ENCODE measurements at regions of chr5 and their contacts with region 1.

Region 1: DNA sequence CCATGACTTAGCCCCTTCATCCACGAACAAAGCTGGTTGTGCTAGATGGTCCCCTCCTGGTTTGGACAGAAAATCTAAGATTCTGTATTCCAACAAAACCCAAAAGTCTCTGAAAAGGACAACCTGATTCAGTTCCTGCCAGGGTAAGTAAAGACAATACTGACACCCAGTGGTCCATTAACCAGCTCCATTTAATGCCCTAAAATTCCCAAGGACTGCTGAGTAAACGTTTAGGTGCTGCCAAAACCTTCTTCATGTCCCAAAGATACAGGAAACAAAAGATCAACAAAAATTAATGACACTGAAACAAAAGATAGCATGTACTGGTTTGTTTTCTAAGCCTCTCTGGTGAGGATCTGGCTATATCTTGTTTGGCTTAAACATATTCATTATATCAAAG is 25.3 kb upstream of the PPP1R2B start:
- DNase-seq: no peak

Region 2: GRCh38 chr5:155616779-155617392 is 1207.9 kb before region 1 on chr5:
- intact Hi-C with region 1: loop called (anchors 10 kb)
- DNase-seq: no peak

Region 3: DNA sequence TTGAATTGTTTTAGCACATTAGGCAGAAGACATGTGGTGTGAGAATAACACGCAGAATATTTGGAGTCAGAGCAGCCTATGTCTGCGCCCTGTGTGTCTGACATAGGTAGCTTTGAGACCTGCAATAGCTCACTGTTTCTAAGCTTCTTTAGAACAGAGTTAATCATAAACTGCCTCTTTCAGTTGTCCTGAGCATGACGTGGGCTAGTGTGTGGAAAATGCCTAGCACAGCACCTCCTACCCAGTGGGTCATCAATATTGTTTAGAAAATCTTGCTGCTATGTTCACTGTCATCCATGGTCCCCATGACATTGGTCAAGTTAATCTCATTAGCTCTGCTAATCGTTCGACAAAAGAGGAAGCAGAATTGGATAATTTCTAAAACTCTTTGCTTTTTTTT is 855.3 kb before region 1 on chr5:
- intact Hi-C with region 1: no loop called
- DNase-seq: no peak

Measured in cardiac septum (tissue), 1 donor.